Mucosa of descending colon (tissue), 3 donors: ENCODE measurements at regions of chr1 and their contacts with region 1.

Region 1: GRCh38 chr1:162035241-162035640 is 11.6 kb upstream of the OLFML2B start:
- DNase-seq: no peak
- ATAC-seq: peak; percentile 40
- H3K4me3 ChIP-seq: no peak overlapping the region
- H3K4me1 ChIP-seq: no peaks in the 10 kb centered on the region
- CTCF ChIP-seq: no peak

Region 2: DNA sequence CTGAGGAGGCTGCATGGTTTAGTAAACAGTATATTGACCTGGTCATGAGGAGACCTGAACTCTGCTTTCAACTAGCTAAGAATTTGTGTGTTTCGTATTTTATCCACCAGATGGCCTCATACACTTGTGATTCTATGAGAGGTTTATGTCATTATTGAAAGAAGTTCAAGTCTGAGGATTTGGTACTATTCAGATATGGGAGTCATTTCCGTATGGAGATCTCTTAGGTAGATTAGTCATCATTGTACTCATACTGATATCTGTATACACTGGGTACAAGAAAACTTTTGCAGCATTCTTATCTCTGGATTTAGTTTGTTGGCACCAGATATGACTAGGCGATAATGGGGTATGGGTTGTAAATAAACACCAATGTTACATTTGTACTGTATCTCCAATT is 242.5 kb before region 1 on chr1:
- intact Hi-C with region 1: loop called (anchors 5 kb)
- DNase-seq: peak in 1 of 3 donors; percentile 23
- ATAC-seq: peak; percentile 71
- H3K4me3 ChIP-seq: no peak overlapping the region
- H3K4me1 ChIP-seq: no peaks in the 10 kb centered on the region
- CTCF ChIP-seq: peak; percentile 19

Region 3: DNA sequence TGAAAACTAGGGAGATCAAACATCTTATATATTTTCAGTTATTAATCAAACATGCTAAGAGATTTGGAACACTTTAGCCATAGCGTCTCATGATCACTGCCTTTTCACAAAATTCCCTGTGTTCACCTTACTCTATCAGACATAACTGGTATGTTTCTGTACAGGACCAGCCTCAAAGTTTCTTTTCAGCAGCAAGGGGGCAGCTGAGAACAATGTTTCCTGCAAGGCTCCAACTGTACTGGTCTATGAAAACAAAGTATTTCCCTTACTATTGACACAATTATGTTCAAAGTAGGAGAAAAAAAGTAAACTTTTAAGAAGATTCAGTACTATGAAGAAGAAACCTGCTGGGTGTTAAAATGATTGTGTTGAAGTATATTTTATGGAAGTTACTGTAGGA is 170.7 kb before region 1 on chr1:
- intact Hi-C with region 1: loop called in 1 of 2 experiments (anchors 10 kb)
- DNase-seq: peak in 1 of 3 donors; percentile 4
- ATAC-seq: no peak
- H3K4me3 ChIP-seq: no peak overlapping the region
- H3K4me1 ChIP-seq: no peaks in the 10 kb centered on the region
- CTCF ChIP-seq: no peak